AG04449 (cell line): ENCODE measurements at regions of chr11 and their contacts with region 1.

Region 1: GRCh38 chr11:76207642-76208401 is 1.5 kb upstream of the WNT11 start:
- DNase-seq: no peak
- H3K4me3 ChIP-seq: peak overlapping the region; percentile 51
- CTCF ChIP-seq: peak; percentile 88

Region 2: DNA sequence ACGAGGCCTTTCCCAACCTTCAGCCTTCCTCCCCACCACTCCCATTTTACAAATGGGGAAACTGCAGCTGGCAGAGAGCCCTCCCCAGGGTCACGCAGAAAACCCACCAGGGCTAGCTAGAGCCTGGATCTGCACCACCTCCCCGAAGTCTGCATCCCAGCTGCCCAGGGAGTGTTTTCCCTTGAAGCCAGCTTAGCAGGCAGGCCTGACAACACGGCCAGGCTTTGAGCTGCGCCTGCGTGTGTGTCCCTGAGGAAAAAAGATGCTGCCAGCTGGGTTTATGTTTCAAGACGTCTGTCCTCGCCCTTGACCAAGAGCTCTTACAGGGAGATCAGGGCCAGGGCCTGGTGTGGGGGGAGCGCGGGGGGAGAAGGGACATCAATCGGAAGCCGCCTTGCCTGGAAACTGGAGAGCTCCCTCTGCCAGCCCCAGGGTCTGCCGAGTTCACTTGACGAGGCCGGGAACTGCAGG is 21.9 kb before region 1 on chr11:
- CTCF ChIA-PET with region 1: interaction called, 24 read pairs
- POLR2A ChIA-PET with region 1: no interaction called
- DNase-seq: no peak
- H3K4me3 ChIP-seq: no peak overlapping the region
- CTCF ChIP-seq: no peak

Region 3: DNA sequence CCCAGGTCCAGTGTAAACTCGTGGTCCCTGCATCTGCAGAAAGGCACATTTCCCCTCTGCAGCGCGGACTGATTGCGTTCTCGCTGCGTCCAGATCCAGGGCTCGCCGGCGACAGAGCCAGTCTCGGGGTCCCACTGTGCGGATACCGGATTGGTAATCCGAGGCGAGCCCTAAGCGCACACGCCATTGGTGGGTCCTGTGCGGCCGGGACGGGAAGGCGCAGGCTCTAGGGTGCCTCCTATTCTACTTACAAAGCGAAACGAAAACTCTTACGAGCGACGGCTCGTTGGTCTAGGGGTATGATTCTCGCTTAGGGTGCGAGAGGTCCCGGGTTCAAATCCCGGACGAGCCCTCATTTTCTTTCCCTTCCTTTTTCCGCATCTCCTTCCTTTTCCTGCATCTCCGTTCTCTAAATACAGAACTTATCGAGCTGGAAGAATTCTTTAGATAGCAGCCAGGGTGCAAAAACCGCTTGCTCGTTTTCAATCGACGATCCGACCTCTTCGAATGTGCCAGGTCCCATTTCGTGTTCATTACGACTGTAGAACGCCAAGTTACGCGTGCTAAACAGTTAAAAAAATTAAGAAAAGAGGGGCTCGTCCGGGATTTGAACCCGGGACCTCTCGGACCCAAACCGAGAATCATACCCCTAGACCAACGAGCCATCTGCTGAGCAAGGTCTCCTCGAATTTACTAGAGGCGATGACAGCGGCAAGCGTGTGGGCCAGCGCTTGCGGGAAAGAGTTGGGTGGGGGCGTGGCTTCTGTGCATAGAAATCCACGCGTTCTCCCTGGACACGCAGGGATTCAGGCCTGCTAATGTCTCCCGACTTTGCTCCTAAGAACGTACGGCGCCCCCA is 27.6 kb after region 1 on chr11:
- CTCF ChIA-PET with region 1: interaction called, 60 read pairs
- POLR2A ChIA-PET with region 1: no interaction called
- DNase-seq: peak; percentile 45
- H3K4me3 ChIP-seq: peak overlapping the region; percentile 92
- CTCF ChIP-seq: no peak

Region 4: DNA sequence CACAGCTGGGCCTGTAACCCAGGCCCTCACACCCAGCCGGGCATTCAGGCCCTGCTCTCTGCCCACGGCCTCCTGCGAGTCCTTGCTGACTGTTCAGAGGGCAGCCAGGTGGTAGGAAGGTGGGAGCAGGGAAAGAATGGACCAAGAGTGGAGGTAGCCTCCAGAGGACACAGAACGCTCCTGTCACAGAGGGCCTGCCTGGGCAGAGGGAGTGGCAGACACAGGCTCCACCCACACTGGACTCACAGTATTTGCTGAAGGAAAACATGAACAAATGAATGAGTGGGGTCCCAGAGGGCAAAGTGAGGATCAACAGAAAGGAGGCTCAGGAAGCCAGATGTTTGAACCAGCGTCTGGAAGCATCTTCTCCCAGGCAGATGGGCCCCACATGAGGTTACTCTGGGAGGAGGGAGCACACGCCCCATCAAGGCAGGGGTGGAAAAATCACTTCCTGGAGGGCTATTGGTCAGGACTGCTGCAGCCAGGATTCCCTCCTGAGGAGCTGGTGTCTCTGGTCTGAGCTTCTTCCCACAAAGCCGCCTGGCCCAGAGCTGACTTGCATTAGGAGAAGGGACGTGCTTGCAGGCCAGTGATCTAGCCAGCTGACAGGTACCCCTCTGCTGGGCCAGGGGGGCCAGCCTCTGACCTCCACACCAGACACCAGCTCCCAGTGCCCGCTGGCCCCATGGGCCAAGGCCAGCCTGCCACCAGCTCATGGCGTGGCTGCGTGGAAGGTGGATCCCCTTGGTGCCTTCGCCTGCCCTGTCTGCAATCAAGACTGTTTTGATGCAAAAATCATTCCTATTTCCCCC is 89.1 kb after region 1 on chr11:
- CTCF ChIA-PET with region 1: interaction called, 10 read pairs
- POLR2A ChIA-PET with region 1: no interaction called
- DNase-seq: no peak
- H3K4me3 ChIP-seq: no peak overlapping the region
- CTCF ChIP-seq: no peak

Region 5: GRCh38 chr11:76318744-76319384 is 111.0 kb after region 1 on chr11:
- CTCF ChIA-PET with region 1: interaction called, 207 read pairs
- POLR2A ChIA-PET with region 1: no interaction called
- DNase-seq: no peak
- H3K4me3 ChIP-seq: no peak overlapping the region
- CTCF ChIP-seq: peak; percentile 88